ENCODE measurements at regions of chr2 and their contacts with region 1.

Region 1: GRCh38 chr2:105744091-105744908 is 412 bp upstream of the NCK2 start:
- DNase-seq: peak; percentile 37 to 87 (median 70)
- ATAC-seq: peak; percentile 74
- H3K4me3 ChIP-seq: peak overlapping the region; percentile 31 to 49
- H3K4me3 Mint-ChIP-seq: peak overlapping the region; percentile 86
- H3K27ac ChIP-seq: peak overlapping the region; percentile 31 to 51
- H3K27ac Mint-ChIP-seq: peak overlapping the region; percentile 94
- H3K4me1 ChIP-seq: peaks cover 58% of the 10 kb centered on the region
- H3K4me1 Mint-ChIP-seq: peaks cover 78% of the 10 kb centered on the region
- H3K27me3 ChIP-seq: no peaks in the 10 kb centered on the region
- H3K27me3 Mint-ChIP-seq: no peaks in the 10 kb centered on the region
- CTCF ChIP-seq: no peak

Region 2: GRCh38 chr2:105697781-105698449 is 46.4 kb before region 1 on chr2:
- CTCF ChIA-PET with region 1: no interaction called
- POLR2A ChIA-PET with region 1: no interaction called
- intact Hi-C with region 1: no loop called
- DNase-seq: no peak
- ATAC-seq: no peak
- H3K4me3 ChIP-seq: no peak overlapping the region
- H3K4me3 Mint-ChIP-seq: no peak overlapping the region
- H3K27ac ChIP-seq: no peak overlapping the region
- H3K27ac Mint-ChIP-seq: no peak overlapping the region
- H3K4me1 ChIP-seq: no peaks in the 10 kb centered on the region
- H3K4me1 Mint-ChIP-seq: peaks cover 2% of the 10 kb centered on the region
- H3K27me3 ChIP-seq: no peaks in the 10 kb centered on the region
- H3K27me3 Mint-ChIP-seq: peaks cover 3% of the 10 kb centered on the region
- CTCF ChIP-seq: no peak

Region 3: GRCh38 chr2:105775809-105776559 is 31.7 kb after region 1 on chr2:
- CTCF ChIA-PET with region 1: interaction called, 3 read pairs
- POLR2A ChIA-PET with region 1: interaction called, 24 read pairs
- intact Hi-C with region 1: loop called in 1 of 2 experiments (anchors 2 kb)
- DNase-seq: peak in 4 of 9 experiments; percentile 52 to 82 (median 62)
- ATAC-seq: peak; percentile 59
- H3K4me3 ChIP-seq: peak overlapping the region; percentile 20 to 49
- H3K4me3 Mint-ChIP-seq: peak overlapping the region; percentile 80
- H3K27ac ChIP-seq: peak overlapping the region; percentile 64 to 83
- H3K27ac Mint-ChIP-seq: peak overlapping the region; percentile 96
- H3K4me1 ChIP-seq: peaks cover 98% of the 10 kb centered on the region
- H3K4me1 Mint-ChIP-seq: peaks cover 94% of the 10 kb centered on the region
- H3K27me3 ChIP-seq: no peaks in the 10 kb centered on the region
- H3K27me3 Mint-ChIP-seq: no peaks in the 10 kb centered on the region
- CTCF ChIP-seq: no peak

Region 4: DNA sequence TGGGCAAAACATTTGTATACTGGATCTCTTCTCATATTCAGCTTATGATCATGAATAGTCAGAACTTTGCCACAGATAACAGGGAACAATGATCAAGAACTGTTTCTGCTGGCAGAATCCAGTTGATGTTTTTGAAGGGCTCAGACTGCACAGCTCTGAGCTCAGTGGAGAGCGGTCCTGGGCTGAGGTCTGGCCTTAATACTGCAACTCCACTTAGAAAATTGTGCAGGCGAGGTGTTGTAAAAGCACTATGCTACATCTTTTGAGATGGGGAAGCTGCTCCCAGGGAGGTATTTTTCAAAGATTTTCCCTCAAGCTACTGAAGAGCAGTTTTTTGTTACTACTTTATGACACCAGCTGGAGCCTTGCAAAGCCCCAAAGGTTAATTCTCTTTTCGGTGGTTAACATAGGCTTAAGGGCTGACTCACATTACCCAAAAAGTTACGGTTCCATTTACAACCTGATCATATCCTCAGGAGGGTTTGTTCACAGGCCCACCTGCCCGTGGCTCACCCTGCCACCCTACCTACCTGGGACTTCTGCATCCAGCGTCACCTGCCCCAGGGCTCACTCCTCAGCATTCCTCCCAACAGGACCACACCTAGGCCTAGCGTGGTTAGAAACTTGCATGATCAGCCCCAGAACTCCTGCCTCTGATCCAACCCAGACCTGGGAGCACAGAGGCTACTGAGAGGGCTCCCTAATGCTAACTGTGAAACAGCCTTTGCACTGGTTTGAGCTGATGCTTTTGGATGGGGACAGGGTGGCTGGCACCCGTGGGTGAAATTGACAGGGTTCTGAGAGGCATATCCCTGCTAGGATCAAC is 114.8 kb after region 1 on chr2:
- CTCF ChIA-PET with region 1: interaction called, 7 read pairs
- POLR2A ChIA-PET with region 1: no interaction called
- intact Hi-C with region 1: loop called (anchors 2 to 5 kb)
- DNase-seq: peak in 5 of 9 experiments; percentile 29 to 49 (median 44)
- ATAC-seq: peak; percentile 32
- H3K4me3 ChIP-seq: no peak overlapping the region
- H3K4me3 Mint-ChIP-seq: peak overlapping the region; percentile 57
- H3K27ac ChIP-seq: peak overlapping the region; percentile 32 to 71
- H3K27ac Mint-ChIP-seq: peak overlapping the region; percentile 94
- H3K4me1 ChIP-seq: peaks cover 92% of the 10 kb centered on the region
- H3K4me1 Mint-ChIP-seq: peaks cover 91% of the 10 kb centered on the region
- H3K27me3 ChIP-seq: no peaks in the 10 kb centered on the region
- H3K27me3 Mint-ChIP-seq: no peaks in the 10 kb centered on the region
- CTCF ChIP-seq: no peak

Region 5: GRCh38 chr2:106030287-106031268 is 286.3 kb after region 1 on chr2:
- CTCF ChIA-PET with region 1: no interaction called
- POLR2A ChIA-PET with region 1: no interaction called
- intact Hi-C with region 1: no loop called
- DNase-seq: no peak
- ATAC-seq: no peak
- H3K4me3 ChIP-seq: no peak overlapping the region
- H3K4me3 Mint-ChIP-seq: no peak overlapping the region
- H3K27ac ChIP-seq: no peak overlapping the region
- H3K27ac Mint-ChIP-seq: no peak overlapping the region
- H3K4me1 ChIP-seq: peaks cover 18% of the 10 kb centered on the region
- H3K4me1 Mint-ChIP-seq: peaks cover 30% of the 10 kb centered on the region
- H3K27me3 ChIP-seq: no peaks in the 10 kb centered on the region
- H3K27me3 Mint-ChIP-seq: no peaks in the 10 kb centered on the region
- CTCF ChIP-seq: no peak

Region 6: GRCh38 chr2:106160786-106161261 is 416.5 kb after region 1 on chr2:
- CTCF ChIA-PET with region 1: no interaction called
- POLR2A ChIA-PET with region 1: interaction called, 3 read pairs
- intact Hi-C with region 1: loop called (anchors 5 to 10 kb)
- DNase-seq: peak in 8 of 9 experiments; percentile 28 to 77 (median 55)
- ATAC-seq: peak; percentile 55
- H3K4me3 ChIP-seq: peak overlapping the region; percentile 68 to 69
- H3K4me3 Mint-ChIP-seq: peak overlapping the region; percentile 92
- H3K27ac ChIP-seq: peak overlapping the region; percentile 77 to 85
- H3K27ac Mint-ChIP-seq: peak overlapping the region; percentile 98
- H3K4me1 ChIP-seq: peaks cover 87% of the 10 kb centered on the region
- H3K4me1 Mint-ChIP-seq: peaks cover 92% of the 10 kb centered on the region
- H3K27me3 ChIP-seq: no peaks in the 10 kb centered on the region
- H3K27me3 Mint-ChIP-seq: no peaks in the 10 kb centered on the region
- CTCF ChIP-seq: no peak